Left colon (tissue), 2 donors: ENCODE measurements at regions of chrX and their contacts with region 1.

Region 1: DNA sequence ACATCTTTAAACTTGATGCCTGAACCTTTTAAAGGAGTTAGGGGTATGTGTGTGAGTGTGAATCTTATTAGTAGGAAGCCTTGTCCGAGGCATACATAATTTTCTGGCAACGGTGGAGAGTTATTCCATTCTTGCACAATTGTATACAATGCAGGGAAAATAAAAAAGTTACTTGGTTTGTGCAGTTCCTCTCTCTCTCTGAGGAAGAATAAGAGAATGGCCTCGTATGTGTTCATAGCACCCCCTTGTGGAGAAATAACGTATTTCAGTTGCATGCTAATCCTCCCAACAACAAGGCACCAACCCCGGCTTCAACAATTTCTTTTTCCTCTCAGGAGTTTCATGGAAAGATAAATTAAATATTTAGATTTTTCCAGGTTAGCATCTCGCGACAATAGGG is 33.7 kb upstream of the FGF13 start:
- DNase-seq: no peak
- ATAC-seq: peak; percentile 57

Region 2: GRCh38 chrX:138128027-138128671 is 617.0 kb before region 1 on chrX:
- intact Hi-C with region 1: loop called in 1 of 2 experiments (anchors 10 kb)
- DNase-seq: peak in 1 of 2 donors; percentile 3
- ATAC-seq: no peak

Region 3: DNA sequence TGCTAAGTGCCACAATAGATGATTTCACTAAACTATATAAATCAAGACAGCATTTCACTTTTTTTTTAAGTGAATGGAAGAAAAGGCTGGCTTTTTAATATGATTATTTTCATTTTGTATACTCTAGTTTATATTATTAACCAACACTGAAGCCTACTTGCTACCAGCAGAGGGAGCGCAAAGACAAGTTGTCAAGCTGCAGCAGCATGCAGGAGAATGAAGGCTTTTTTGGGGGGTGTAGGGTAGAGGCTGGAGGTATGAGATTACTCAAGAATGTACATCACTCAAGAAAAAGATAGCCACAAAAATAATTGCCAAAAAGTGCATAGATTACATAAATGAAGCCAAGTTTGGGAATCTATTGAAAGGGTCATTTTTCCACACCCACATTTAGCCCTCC is 553.2 kb before region 1 on chrX:
- intact Hi-C with region 1: loop called in 1 of 2 experiments (anchors 10 kb)
- DNase-seq: peak in 1 of 2 donors; percentile 7
- ATAC-seq: no peak

Region 4: DNA sequence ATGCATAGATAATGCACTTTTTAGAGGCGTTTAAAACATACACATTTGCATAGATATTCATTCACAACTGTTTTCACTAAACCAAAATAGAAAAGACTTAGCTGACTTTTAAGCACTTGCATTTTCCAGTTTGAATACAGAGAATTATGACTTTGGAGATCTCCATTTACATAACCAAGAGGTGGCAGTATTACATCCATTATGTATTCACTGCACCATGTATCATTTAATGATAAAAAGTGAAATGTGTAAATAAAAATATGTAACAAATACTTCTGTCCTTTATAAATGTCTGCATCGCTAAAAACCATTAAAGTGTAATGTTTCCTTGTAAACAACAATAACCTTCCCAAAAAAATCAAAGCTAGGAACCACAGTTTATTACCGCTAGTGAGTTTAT is 446.9 kb before region 1 on chrX:
- intact Hi-C with region 1: loop called in 1 of 2 experiments (anchors 10 kb)
- DNase-seq: no peak
- ATAC-seq: no peak

Region 5: GRCh38 chrX:138847928-138848327 is 102.7 kb after region 1 on chrX:
- intact Hi-C with region 1: no loop called
- DNase-seq: no peak
- ATAC-seq: no peak